Caco-2 (cell line): ENCODE measurements at regions of chr1 and their contacts with region 1.

Region 1: DNA sequence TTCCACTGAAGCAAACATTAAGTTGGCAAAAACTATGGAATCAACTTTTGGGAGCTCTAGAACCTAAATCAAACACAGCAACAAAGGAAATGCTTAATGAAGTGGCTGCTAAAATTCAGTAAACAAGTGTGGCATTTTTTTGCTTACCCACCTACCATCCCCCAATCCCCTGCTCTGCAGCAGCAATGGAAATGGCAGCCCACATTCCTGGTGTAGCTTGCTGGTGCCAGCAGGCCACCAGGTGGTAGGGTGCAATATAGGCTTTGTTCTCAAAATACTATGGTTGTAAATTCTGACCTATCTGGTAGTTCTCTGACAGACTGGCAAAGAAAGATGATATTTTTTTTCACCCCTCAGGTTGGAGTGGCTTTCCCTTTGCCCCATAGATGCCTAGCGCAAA is 42.8 kb downstream of the SHCBP1L start:
- DNase-seq: peak in 1 of 2 experiments; percentile 17
- H3K4me3 ChIP-seq: no peak overlapping the region
- H3K4me3 Mint-ChIP-seq: no peak overlapping the region
- H3K27ac Mint-ChIP-seq: no peak overlapping the region
- H3K4me1 ChIP-seq: peaks cover 4% of the 10 kb centered on the region; the same call in 1 of the 2 replicates
- H3K4me1 Mint-ChIP-seq: peaks cover 4% of the 10 kb centered on the region
- H3K27me3 ChIP-seq: no peaks in the 10 kb centered on the region
- H3K27me3 Mint-ChIP-seq: no peaks in the 10 kb centered on the region
- CTCF ChIP-seq: no peak

Region 2: DNA sequence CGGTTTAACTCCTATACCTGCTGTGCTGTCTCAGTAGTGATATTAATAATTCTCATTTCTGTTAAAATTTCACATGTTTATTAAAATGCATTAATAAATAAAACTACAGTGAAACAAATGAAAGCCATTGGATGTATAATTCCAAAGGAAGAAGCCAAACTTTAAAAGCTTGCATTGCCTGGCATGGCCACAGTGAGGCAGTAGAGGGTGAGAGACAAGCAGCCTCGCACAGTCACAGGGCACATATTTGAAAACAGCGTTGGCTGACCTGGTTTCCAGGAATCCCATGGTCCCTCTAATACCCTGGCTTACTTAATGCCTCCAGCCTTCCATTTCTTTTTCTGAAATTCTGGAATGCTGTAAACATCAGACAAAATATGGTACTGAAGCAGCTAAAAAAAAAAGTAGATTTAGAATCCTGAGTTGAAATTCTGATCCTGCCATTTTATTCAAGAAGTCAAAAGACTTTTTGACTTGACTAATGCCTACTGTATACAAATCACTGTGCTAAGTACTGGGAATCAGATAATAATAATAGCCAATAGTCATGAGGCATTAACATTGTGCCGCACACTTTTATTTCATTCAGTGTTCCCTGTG is 314.4 kb before region 1 on chr1:
- CTCF ChIA-PET with region 1: no interaction called
- POLR2A ChIA-PET with region 1: no interaction called
- intact Hi-C with region 1: loop called (anchors 5 kb)
- DNase-seq: peak in 1 of 2 experiments; percentile 64
- H3K4me3 ChIP-seq: no peak overlapping the region
- H3K4me3 Mint-ChIP-seq: no peak overlapping the region
- H3K27ac Mint-ChIP-seq: no peak overlapping the region
- H3K4me1 ChIP-seq: no peaks in the 10 kb centered on the region
- H3K4me1 Mint-ChIP-seq: no peaks in the 10 kb centered on the region
- H3K27me3 ChIP-seq: no peaks in the 10 kb centered on the region
- H3K27me3 Mint-ChIP-seq: no peaks in the 10 kb centered on the region
- CTCF ChIP-seq: peak; percentile 74 to 83